Spleen (tissue), 13 donors: ENCODE measurements at regions of chr11 and their contacts with region 1.

Region 1: GRCh38 chr11:73350908-73351636 is 25.1 kb upstream of the RELT start:
- DNase-seq: peak; percentile 88
- H3K4me3 ChIP-seq: no peak overlapping the region
- H3K27ac ChIP-seq: peak overlapping the region in 1 of 8 donors; percentile 21
- H3K4me1 ChIP-seq: peaks cover 0 to 23% (median 12%) of the 10 kb centered on the region in 6 donors
- H3K27me3 ChIP-seq: no peaks in the 10 kb centered on the region
- CTCF ChIP-seq: peak; percentile 89 to 97 (median 93)
- POLR2A ChIP-seq: no peak

Region 2: DNA sequence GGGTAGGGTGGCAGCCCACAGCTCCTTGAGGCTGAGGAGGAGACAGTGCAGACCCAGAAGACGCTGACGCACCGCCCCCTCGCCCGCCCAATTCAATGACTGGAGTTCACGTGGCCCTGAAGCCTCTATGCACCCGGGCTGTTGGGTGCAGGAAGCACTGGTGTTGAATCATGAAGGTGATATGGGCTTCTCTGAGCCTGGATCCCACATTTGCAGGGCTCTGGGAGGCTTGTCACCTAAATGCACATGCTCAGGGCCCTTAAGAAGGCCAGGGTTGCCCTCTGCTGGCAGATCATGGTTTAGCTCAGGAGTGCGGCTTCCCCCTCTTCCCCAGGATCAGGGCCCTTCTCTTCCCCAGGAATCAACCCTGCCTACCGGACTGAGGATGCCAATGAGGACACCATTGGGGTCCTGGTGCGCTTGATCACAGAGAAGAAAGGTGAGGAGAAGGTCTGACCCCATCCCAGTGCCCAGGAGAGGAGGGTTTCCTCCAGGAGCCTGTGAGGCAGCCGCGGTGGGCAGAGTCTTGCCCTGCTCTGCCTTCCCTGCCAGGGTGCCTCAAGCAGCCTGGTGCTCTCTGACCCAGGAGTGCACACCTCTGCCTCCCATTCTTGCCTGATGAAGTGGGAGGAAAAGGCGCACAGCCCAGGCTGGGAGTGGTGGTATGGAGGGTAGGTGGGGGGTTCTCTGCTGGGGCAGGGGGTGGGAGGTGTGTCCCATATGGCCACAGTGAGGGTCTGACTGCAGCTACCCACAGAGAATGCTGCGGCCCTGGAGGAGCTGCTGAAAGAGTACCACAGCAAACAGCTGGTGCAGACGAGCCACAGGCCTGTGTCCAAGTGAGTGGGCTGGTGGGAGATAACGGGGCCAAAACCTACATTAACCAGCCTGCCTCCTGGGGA is 42.7 kb after region 1 on chr11:
- intact Hi-C with region 1: loop called (anchors 5 kb)
- DNase-seq: peak; percentile 88
- H3K4me3 ChIP-seq: no peak overlapping the region
- H3K27ac ChIP-seq: peak overlapping the region in 4 of 8 donors; percentile 19 to 71 (median 58)
- H3K4me1 ChIP-seq: peaks cover 4 to 52% (median 29%) of the 10 kb centered on the region in 6 donors
- H3K27me3 ChIP-seq: no peaks in the 10 kb centered on the region
- CTCF ChIP-seq: peak; percentile 78 to 91 (median 86)
- POLR2A ChIP-seq: no peak

Region 3: GRCh38 chr11:73661035-73661628 is 310.1 kb after region 1 on chr11:
- intact Hi-C with region 1: loop called (anchors 10 kb)
- DNase-seq: peak; percentile 97
- H3K4me3 ChIP-seq: peak overlapping the region in 6 of 8 donors; percentile 16 to 59 (median 22)
- H3K27ac ChIP-seq: peak overlapping the region in 2 of 8 donors; percentile 25 to 28
- H3K4me1 ChIP-seq: peaks cover 0 to 42% (median 27%) of the 10 kb centered on the region in 6 donors
- H3K27me3 ChIP-seq: peaks cover 0 to 14% (median 0%) of the 10 kb centered on the region in 7 donors
- CTCF ChIP-seq: peak; percentile 96 to 100 (median 98)
- POLR2A ChIP-seq: no peak